ENCODE measurements at regions of chr12 and their contacts with region 1.

Region 1: DNA sequence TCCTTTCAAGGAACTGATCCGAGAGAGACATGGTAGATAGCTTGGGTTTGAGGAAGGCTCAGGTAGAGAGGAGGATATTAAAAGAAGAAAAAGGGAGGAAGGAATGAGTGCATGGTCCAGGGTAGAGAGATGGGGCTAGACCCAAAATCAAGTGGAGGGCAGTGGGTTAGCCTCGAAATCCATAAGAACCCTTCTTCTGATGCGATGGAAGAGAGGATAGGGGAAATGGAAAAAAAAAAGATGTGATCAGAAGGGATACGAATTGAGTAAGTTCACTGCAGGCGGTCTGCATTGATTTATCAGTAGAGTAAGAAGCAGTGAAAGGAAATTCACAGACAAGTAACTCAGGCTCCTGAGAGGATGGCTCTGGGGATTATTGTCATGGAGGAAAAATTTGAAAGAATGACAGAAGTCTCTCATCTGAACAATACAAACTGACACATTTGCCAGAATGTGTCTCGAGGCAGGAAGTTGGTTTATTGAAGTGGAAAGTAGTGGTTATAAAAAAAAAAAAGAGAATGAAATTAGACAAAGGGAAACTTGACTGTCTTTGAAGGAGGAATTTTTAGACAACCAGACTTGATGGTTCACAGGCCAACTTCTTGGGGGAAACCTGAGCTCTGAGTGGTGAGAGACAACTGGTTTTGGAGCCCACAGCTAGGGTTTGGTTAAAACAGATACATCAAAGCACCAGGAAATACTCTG is 10.2 kb downstream of the PPFIBP1 start:
- DNase-seq: peak in 8 of 9 donors; percentile 26 to 62 (median 54)
- ATAC-seq: peak; percentile 83
- H3K4me3 ChIP-seq: no peak overlapping the region
- H3K4me3 Mint-ChIP-seq: peak overlapping the region; percentile 2 to 78 (median 60)
- H3K27ac ChIP-seq: no peak overlapping the region
- H3K27ac Mint-ChIP-seq: peak overlapping the region; percentile 2 to 86 (median 62)
- H3K4me1 ChIP-seq: peaks cover 11 to 16% of the 10 kb centered on the region in 2 donors
- H3K4me1 Mint-ChIP-seq: peaks cover 18 to 49% (median 39%) of the 10 kb centered on the region in 7 donors
- H3K27me3 ChIP-seq: no peaks in the 10 kb centered on the region
- H3K27me3 Mint-ChIP-seq: peaks cover 0 to 10% (median 0%) of the 10 kb centered on the region in 5 donors

Region 2: DNA sequence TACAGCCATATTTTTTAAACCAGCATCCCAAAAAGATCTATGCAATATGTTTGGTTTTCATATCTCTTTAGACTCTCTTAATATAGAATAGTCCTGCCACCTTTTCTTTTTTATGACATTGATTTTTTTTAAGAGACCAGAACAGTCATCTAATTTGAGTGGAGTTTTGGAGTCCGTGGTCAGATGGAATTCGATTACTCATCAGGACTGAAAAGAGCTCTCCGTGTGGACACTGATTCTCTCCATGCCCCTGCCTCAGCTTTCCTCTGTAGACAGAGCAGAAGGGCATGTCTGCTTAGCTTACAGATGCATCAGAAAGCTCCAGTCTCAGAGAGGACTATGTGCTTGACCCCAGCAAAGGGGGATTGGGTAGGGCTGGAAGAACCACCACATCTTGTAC is 59.9 kb before region 1 on chr12:
- CTCF ChIA-PET with region 1: no interaction called
- POLR2A ChIA-PET with region 1: no interaction called
- intact Hi-C with region 1: no loop called
- DNase-seq: no peak
- ATAC-seq: no peak
- H3K4me3 ChIP-seq: no peak overlapping the region
- H3K4me3 Mint-ChIP-seq: no peak overlapping the region
- H3K27ac ChIP-seq: no peak overlapping the region
- H3K27ac Mint-ChIP-seq: no peak overlapping the region
- H3K4me1 ChIP-seq: peaks cover 0 to under 1% of the 10 kb centered on the region in 2 donors
- H3K4me1 Mint-ChIP-seq: peaks cover 7 to 29% (median 20%) of the 10 kb centered on the region in 7 donors
- H3K27me3 ChIP-seq: no peaks in the 10 kb centered on the region
- H3K27me3 Mint-ChIP-seq: no peaks in the 10 kb centered on the region

Region 3: GRCh38 chr12:27515671-27516070 is 18.5 kb before region 1 on chr12:
- CTCF ChIA-PET with region 1: no interaction called
- POLR2A ChIA-PET with region 1: no interaction called
- intact Hi-C with region 1: loop called in 1 of 2 experiments (anchors 1 kb)
- DNase-seq: no peak
- ATAC-seq: no peak
- H3K4me3 ChIP-seq: no peak overlapping the region
- H3K4me3 Mint-ChIP-seq: no peak overlapping the region
- H3K27ac ChIP-seq: no peak overlapping the region
- H3K27ac Mint-ChIP-seq: no peak overlapping the region
- H3K4me1 ChIP-seq: no peaks in the 10 kb centered on the region
- H3K4me1 Mint-ChIP-seq: peaks cover 0 to 6% (median 0%) of the 10 kb centered on the region in 7 donors
- H3K27me3 ChIP-seq: no peaks in the 10 kb centered on the region
- H3K27me3 Mint-ChIP-seq: peaks cover 10 to 36% (median 15%) of the 10 kb centered on the region in 5 donors

Region 4: GRCh38 chr12:27585739-27586265 is 51.6 kb after region 1 on chr12:
- CTCF ChIA-PET with region 1: no interaction called
- POLR2A ChIA-PET with region 1: no interaction called
- intact Hi-C with region 1: loop called in 1 of 2 experiments (anchors 5 kb)
- DNase-seq: no peak
- ATAC-seq: no peak
- H3K4me3 ChIP-seq: no peak overlapping the region
- H3K4me3 Mint-ChIP-seq: no peak overlapping the region
- H3K27ac ChIP-seq: no peak overlapping the region
- H3K27ac Mint-ChIP-seq: no peak overlapping the region
- H3K4me1 ChIP-seq: no peaks in the 10 kb centered on the region
- H3K4me1 Mint-ChIP-seq: peaks cover 12 to 36% (median 24%) of the 10 kb centered on the region in 7 donors
- H3K27me3 ChIP-seq: no peaks in the 10 kb centered on the region
- H3K27me3 Mint-ChIP-seq: no peaks in the 10 kb centered on the region

Measured in naive thymus-derived CD4-positive, alpha-beta T cell (primary cell).